Activated CD4-positive, alpha-beta T cell treated with anti-CD3 and anti-CD28 coated beads for 36 hours (primary cell): ENCODE measurements at regions of chr9 and their contacts with region 1.

Region 1: DNA sequence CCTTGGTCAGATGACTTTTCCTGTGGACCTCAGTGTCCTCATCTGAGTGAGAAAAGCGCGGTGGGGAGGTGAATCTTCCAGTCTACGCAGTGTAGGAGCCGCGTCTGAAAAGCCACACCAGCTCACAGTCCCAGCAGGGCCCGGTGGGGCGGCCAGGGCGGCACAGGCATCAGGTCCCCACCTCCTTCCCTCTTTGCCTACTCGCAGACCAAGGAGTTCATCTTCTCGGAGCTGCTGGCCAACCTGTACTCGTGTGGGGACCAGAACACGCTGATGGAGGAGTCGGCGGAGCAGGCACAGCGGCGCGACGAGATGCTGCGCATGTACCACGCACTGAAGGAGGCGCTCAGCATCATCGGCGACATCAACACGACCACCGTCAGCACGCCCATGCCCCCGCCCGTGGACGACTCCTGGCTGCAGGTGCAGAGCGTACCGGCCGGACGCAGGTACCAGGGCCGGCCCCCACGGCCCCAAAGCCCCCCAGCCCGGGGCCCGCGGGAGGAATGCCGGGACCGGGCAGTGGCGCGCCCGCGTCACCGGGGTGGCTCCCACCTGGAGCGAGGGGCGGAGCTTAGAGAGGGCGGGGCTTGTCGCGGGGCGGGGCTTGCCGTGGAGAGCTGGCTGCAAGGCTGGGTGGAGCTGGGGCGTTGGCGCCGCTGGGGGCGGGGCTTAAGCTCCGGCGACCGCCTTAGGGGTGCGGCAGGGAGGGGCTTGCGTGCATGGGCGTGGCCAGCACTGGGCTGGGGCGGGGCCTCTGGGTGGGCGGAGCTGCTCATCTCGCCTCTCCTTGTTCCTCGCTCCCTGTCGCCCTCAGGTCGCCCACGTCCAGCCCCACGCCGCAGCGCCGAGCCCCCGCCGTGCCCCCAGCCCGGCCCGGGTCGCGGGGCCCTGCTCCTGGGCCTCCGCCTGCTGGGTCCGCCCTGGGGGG is 25.6 kb downstream of the GOLGA2 start:
- DNase-seq: peak; percentile 99
- ATAC-seq: peak; percentile 98
- H3K4me3 Mint-ChIP-seq: peak overlapping the region; percentile 78
- H3K27ac Mint-ChIP-seq: peak overlapping the region; percentile 42
- H3K4me1 Mint-ChIP-seq: peaks cover 7% of the 10 kb centered on the region
- H3K27me3 Mint-ChIP-seq: peaks cover 10% of the 10 kb centered on the region

Region 2: DNA sequence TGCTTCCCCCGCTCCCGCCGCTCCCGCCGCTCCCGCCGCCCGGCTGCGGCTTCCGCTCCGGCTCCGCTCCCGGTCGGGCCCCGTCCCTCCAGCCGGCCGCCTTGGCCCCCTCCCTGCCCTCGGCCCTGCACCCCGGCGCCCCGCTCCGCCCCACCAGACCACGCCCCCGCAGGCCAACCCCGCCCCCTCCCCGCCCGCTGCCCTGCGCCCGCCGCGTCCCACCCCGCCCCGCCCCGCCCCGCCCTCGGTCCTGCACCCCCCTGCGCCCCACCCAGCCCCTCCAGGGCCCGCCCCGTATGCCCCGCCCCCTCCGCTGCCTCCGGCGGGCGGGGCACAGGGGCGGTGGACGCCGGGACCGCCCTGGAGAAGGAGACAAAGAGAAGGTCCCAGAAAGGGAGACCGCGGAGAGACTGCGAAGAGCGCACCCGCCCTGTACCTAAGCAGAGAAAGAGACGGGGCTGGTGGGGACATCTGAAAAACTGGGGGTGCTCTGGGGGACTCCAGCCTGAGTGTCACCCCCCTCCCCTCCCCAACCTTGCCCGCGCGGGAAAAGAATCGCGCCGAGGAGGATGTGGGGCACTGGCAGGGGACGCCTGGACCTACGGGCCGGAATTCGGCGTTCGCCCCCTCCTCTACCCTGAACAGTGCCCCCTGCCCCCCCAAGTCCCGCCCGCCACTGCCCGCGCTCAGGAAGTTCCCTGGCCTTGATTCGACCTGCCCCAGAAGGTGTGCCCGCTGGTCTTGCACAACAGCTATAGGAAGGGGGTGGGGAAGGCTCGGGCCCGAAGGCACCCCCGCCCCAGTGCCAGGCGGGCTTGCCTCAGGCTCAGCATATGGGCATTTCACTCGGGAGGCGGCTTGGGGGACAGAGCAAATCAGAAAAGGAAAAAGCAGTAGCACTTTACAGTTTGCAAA is 680.9 kb before region 1 on chr9:
- CTCF ChIA-PET with region 1: no interaction called
- POLR2A ChIA-PET with region 1: no interaction called
- intact Hi-C with region 1: loop called in 1 of 2 experiments (anchors 2 kb)
- DNase-seq: peak; percentile 88
- ATAC-seq: peak; percentile 85
- H3K4me3 Mint-ChIP-seq: peak overlapping the region; percentile 71
- H3K27ac Mint-ChIP-seq: peak overlapping the region; percentile 38
- H3K4me1 Mint-ChIP-seq: peaks cover 26% of the 10 kb centered on the region
- H3K27me3 Mint-ChIP-seq: no peaks in the 10 kb centered on the region

Region 3: GRCh38 chr9:128203024-128203706 is 47.0 kb before region 1 on chr9 and contains the start of gene DNM1:
- CTCF ChIA-PET with region 1: no interaction called
- POLR2A ChIA-PET with region 1: interaction called, 3 read pairs
- intact Hi-C with region 1: loop called in 1 of 2 experiments (anchors 1 kb)
- DNase-seq: peak; percentile 83
- ATAC-seq: peak; percentile 95
- H3K4me3 Mint-ChIP-seq: peak within 1 kb of the TSS; percentile 39
- H3K27ac Mint-ChIP-seq: peak within 1 kb of the TSS; percentile 66
- H3K4me1 Mint-ChIP-seq: peaks cover 12% of the 10 kb centered on the region
- H3K27me3 Mint-ChIP-seq: peaks cover 11% of the 10 kb centered on the region
- total RNA-seq, gene DNM1: 0.50 to 0.72 TPM

Region 4: GRCh38 chr9:128339771-128340690 is 89.9 kb after region 1 on chr9 and contains the start of gene SLC27A4:
- CTCF ChIA-PET with region 1: interaction called, 3 read pairs
- POLR2A ChIA-PET with region 1: no interaction called
- intact Hi-C with region 1: loop called in 1 of 2 experiments (anchors 1 kb)
- DNase-seq: peak; percentile 88
- ATAC-seq: peak; percentile 93
- H3K4me3 Mint-ChIP-seq: peak within 1 kb of the TSS; percentile 88
- H3K27ac Mint-ChIP-seq: peak within 1 kb of the TSS; percentile 83
- H3K4me1 Mint-ChIP-seq: peaks cover 6% of the 10 kb centered on the region
- H3K27me3 Mint-ChIP-seq: no peaks in the 10 kb centered on the region
- total RNA-seq, gene SLC27A4: 8.4 to 10.2 TPM

Region 5: DNA sequence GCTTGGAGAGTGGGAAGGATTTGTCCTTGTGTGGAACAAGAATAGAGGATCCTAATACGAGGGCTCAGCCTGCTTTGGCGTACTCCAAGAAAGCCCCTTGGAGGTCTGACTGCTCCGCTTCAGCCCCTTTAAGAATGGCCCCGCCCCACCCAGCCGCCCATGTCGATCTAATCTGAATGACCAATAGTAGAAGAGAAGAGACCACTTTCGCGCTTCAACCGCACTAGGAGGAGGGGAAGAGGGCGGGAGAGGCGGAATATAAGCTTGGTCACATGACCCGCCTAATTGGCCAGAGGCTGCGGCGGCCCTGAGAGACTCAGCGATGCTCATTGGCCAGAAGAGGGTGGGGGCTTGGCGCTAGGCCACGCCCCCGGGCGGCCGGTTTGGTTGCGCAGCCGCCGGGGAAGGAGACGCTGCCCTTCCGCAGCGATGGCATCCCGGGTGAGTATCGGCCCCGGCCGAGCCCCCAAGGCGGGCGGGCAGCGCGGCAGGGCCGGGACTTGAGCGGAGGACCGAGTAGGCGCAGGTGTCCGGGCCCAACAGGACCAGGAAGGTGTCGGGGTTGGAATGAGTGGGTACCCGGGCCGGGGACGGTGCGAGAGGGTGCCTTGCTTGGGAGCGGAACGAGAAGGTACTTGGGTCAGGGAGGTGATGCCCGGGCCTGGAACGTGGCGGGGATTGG is 786.2 kb after region 1 on chr9 and contains the start of gene MIGA2:
- CTCF ChIA-PET with region 1: no interaction called
- POLR2A ChIA-PET with region 1: no interaction called
- intact Hi-C with region 1: loop called in 1 of 2 experiments (anchors 1 kb)
- DNase-seq: peak; percentile 96
- ATAC-seq: peak; percentile 99
- H3K4me3 Mint-ChIP-seq: peak within 1 kb of the TSS; percentile 98
- H3K27ac Mint-ChIP-seq: peak within 1 kb of the TSS; percentile 83
- H3K4me1 Mint-ChIP-seq: peaks cover 27% of the 10 kb centered on the region
- H3K27me3 Mint-ChIP-seq: no peaks in the 10 kb centered on the region
- total RNA-seq, gene MIGA2: 15.7 to 25.8 TPM